CD4-positive, alpha-beta memory T cell (primary cell): ENCODE measurements at regions of chr18 and their contacts with region 1.

Region 1: DNA sequence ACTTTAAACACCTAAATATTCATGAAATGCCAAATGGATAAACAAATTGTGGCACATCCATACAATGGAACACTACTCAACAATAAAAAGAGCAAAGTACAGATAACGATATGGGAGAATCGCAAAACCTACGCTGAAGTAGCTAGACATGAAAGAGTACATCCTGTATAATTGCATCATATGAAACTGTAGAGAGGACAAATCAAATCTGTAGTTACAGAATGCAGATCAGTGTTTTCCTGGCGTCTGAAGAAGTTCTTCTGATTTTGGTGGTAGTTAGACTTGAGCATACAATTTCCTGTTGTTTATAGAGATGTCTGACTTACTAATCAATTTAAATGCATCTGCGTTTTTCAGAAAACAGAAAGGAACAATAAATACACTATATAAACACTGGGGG is 394.4 kb downstream of the SOCS6 start:
- DNase-seq: peak in 4 of 5 donors; percentile 44 to 62 (median 48)
- H3K4me3 ChIP-seq: no peak overlapping the region
- H3K4me3 Mint-ChIP-seq: peak overlapping the region in 5 of 8 donors; percentile 2 to 34 (median 14)
- H3K27ac ChIP-seq: peak overlapping the region; percentile 15
- H3K27ac Mint-ChIP-seq: peak overlapping the region; percentile 60 to 92 (median 84)
- H3K4me1 ChIP-seq: peaks cover 18% of the 10 kb centered on the region
- H3K4me1 Mint-ChIP-seq: peaks cover 8 to 17% (median 13%) of the 10 kb centered on the region in 4 donors
- H3K27me3 ChIP-seq: no peaks in the 10 kb centered on the region
- H3K27me3 Mint-ChIP-seq: no peaks in the 10 kb centered on the region

Region 2: GRCh38 chr18:70645971-70646370 is 37.3 kb before region 1 on chr18:
- CTCF ChIA-PET with region 1: no interaction called
- POLR2A ChIA-PET with region 1: no interaction called
- intact Hi-C with region 1: loop called (anchors 5 kb)
- DNase-seq: no peak
- H3K4me3 ChIP-seq: no peak overlapping the region
- H3K4me3 Mint-ChIP-seq: no peak overlapping the region
- H3K27ac ChIP-seq: no peak overlapping the region
- H3K27ac Mint-ChIP-seq: no peak overlapping the region
- H3K4me1 ChIP-seq: peaks cover 7% of the 10 kb centered on the region
- H3K4me1 Mint-ChIP-seq: peaks cover 5 to 10% (median 6%) of the 10 kb centered on the region in 4 donors
- H3K27me3 ChIP-seq: no peaks in the 10 kb centered on the region
- H3K27me3 Mint-ChIP-seq: no peaks in the 10 kb centered on the region